CD4-positive, alpha-beta memory T cell (primary cell): ENCODE measurements at regions of chr4 and their contacts with region 1.

Region 1: GRCh38 chr4:118835571-118836300 is at the start of gene SEC24D:
- DNase-seq: peak; percentile 79 to 86 (median 84)
- H3K4me3 ChIP-seq: peak within 1 kb of the TSS; percentile 71 to 84
- H3K4me3 Mint-ChIP-seq: peak within 1 kb of the TSS; percentile 99 to 100 (median 100)
- H3K27ac ChIP-seq: peak within 1 kb of the TSS; percentile 77
- H3K27ac Mint-ChIP-seq: peak within 1 kb of the TSS; percentile 95 to 100 (median 99)
- H3K4me1 ChIP-seq: peaks cover 23% of the 10 kb centered on the region
- H3K4me1 Mint-ChIP-seq: peaks cover 20 to 36% (median 30%) of the 10 kb centered on the region in 4 donors
- H3K27me3 ChIP-seq: no peaks in the 10 kb centered on the region
- H3K27me3 Mint-ChIP-seq: no peaks in the 10 kb centered on the region
- total RNA-seq, gene SEC24D: 34.5 to 36.8 TPM

Region 2: GRCh38 chr4:118684873-118685811 is 150.6 kb before region 1 on chr4 and contains the start of gene METTL14:
- CTCF ChIA-PET with region 1: interaction called, 3 read pairs
- POLR2A ChIA-PET with region 1: no interaction called
- intact Hi-C with region 1: loop called (anchors 10 kb)
- DNase-seq: peak; percentile 83 to 87 (median 83)
- H3K4me3 ChIP-seq: peak within 1 kb of the TSS; percentile 60 to 87
- H3K4me3 Mint-ChIP-seq: peak within 1 kb of the TSS; percentile 94 to 98 (median 97)
- H3K27ac ChIP-seq: peak within 1 kb of the TSS; percentile 80
- H3K27ac Mint-ChIP-seq: peak within 1 kb of the TSS; percentile 85 to 99 (median 98)
- H3K4me1 ChIP-seq: peaks cover 27% of the 10 kb centered on the region
- H3K4me1 Mint-ChIP-seq: peaks cover 20 to 31% (median 25%) of the 10 kb centered on the region in 4 donors
- H3K27me3 ChIP-seq: no peaks in the 10 kb centered on the region
- H3K27me3 Mint-ChIP-seq: no peaks in the 10 kb centered on the region
- total RNA-seq, gene METTL14: 67.2 to 70.5 TPM

Region 3: GRCh38 chr4:118850488-118851173 is 14.9 kb after region 1 on chr4:
- CTCF ChIA-PET with region 1: interaction called, 6 read pairs
- POLR2A ChIA-PET with region 1: interaction called, 27 read pairs
- intact Hi-C with region 1: loop called (anchors 1 kb)
- DNase-seq: peak; percentile 54 to 72 (median 66)
- H3K4me3 ChIP-seq: peak overlapping the region; percentile 63 to 72
- H3K4me3 Mint-ChIP-seq: peak overlapping the region; percentile 94 to 97 (median 96)
- H3K27ac ChIP-seq: peak overlapping the region; percentile 75
- H3K27ac Mint-ChIP-seq: peak overlapping the region; percentile 83 to 98 (median 96)
- H3K4me1 ChIP-seq: peaks cover 18% of the 10 kb centered on the region
- H3K4me1 Mint-ChIP-seq: peaks cover 19 to 34% (median 26%) of the 10 kb centered on the region in 4 donors
- H3K27me3 ChIP-seq: no peaks in the 10 kb centered on the region
- H3K27me3 Mint-ChIP-seq: peaks cover 2 to 4% of the 10 kb centered on the region in 2 donors

Region 4: DNA sequence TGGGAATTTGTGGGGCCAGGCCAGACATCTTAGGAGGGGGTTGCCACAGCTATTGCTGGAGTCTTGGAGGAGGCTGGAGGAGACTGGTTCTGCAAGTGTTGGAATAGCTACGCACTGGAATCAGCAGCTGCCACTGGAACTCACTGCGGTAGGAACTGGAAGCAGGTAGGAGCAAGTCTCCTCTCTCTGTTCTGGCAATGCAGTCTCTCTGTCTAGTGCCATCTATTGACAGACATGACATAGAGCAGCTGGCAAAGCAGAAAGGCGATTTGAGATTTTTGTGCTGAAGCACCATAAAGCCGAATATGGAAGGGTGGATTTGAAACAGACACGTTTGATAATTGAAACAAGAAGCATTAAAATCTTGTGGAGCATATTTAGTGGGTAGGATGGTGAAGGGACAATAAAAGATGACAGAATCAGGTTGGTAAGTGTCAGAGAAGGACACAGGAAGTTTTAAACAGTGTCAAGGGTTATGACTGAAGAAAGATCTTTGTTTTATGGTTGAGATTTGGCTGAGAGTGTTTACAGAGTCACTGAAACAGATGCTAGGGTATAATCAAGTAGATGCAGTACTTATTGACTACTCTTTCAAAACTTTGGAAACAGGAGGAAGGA is 29.5 kb after region 1 on chr4:
- CTCF ChIA-PET with region 1: interaction called, 14 read pairs
- POLR2A ChIA-PET with region 1: interaction called, 3 read pairs
- intact Hi-C with region 1: no loop called
- DNase-seq: peak in 4 of 5 donors; percentile 22 to 35 (median 26)
- H3K4me3 ChIP-seq: no peak overlapping the region
- H3K4me3 Mint-ChIP-seq: no peak overlapping the region
- H3K27ac ChIP-seq: no peak overlapping the region
- H3K27ac Mint-ChIP-seq: no peak overlapping the region
- H3K4me1 ChIP-seq: no peaks in the 10 kb centered on the region
- H3K4me1 Mint-ChIP-seq: no peaks in the 10 kb centered on the region
- H3K27me3 ChIP-seq: no peaks in the 10 kb centered on the region
- H3K27me3 Mint-ChIP-seq: no peaks in the 10 kb centered on the region

Region 5: GRCh38 chr4:119220751-119221150 is 385.0 kb after region 1 on chr4:
- CTCF ChIA-PET with region 1: no interaction called
- POLR2A ChIA-PET with region 1: no interaction called
- intact Hi-C with region 1: no loop called
- DNase-seq: no peak
- H3K4me3 ChIP-seq: no peak overlapping the region
- H3K4me3 Mint-ChIP-seq: no peak overlapping the region
- H3K27ac ChIP-seq: no peak overlapping the region
- H3K27ac Mint-ChIP-seq: peak overlapping the region in 2 of 7 donors; percentile 5 to 6
- H3K4me1 ChIP-seq: no peaks in the 10 kb centered on the region
- H3K4me1 Mint-ChIP-seq: peaks cover 17 to 24% (median 21%) of the 10 kb centered on the region in 4 donors
- H3K27me3 ChIP-seq: no peaks in the 10 kb centered on the region
- H3K27me3 Mint-ChIP-seq: no peaks in the 10 kb centered on the region